Endothelial cell of umbilical vein (primary cell): ENCODE measurements at regions of chr3 and their contacts with region 1.

Region 1: DNA sequence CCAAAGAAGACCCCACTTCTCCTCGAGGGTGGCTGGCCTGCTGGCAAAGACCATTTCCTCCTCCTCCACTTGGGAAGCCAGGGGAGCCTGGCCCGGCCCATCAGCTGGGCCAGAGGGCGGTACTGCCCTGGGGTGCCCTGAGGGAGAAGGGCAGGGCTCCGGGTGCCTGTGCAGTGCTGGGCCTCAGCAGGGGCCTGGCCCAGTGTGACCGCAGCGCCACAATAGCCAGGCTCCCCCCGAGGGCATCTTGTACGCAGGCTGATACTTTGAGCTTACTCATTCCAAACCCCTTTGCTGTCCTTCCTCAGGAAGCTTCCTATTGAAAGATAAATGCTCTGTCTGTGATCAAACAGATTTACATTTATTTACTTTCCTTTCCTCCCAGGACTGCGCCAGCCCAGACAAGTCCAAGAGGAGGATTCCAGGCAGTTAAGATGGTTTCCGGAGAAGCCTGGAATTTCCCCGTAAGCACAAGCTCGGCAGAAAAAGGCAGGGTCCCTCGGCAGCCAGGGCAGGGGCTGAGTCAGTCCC is 240.1 kb downstream of the XXYLT1 start:
- DNase-seq: peak; percentile 95
- H3K4me3 ChIP-seq: no peak overlapping the region
- H3K27ac ChIP-seq: peak overlapping the region; percentile 99
- H3K4me1 ChIP-seq: peaks cover 53% of the 10 kb centered on the region
- H3K27me3 ChIP-seq: no peaks in the 10 kb centered on the region
- CTCF ChIP-seq: no peak
- POLR2A ChIP-seq: peak; percentile 65

Region 2: DNA sequence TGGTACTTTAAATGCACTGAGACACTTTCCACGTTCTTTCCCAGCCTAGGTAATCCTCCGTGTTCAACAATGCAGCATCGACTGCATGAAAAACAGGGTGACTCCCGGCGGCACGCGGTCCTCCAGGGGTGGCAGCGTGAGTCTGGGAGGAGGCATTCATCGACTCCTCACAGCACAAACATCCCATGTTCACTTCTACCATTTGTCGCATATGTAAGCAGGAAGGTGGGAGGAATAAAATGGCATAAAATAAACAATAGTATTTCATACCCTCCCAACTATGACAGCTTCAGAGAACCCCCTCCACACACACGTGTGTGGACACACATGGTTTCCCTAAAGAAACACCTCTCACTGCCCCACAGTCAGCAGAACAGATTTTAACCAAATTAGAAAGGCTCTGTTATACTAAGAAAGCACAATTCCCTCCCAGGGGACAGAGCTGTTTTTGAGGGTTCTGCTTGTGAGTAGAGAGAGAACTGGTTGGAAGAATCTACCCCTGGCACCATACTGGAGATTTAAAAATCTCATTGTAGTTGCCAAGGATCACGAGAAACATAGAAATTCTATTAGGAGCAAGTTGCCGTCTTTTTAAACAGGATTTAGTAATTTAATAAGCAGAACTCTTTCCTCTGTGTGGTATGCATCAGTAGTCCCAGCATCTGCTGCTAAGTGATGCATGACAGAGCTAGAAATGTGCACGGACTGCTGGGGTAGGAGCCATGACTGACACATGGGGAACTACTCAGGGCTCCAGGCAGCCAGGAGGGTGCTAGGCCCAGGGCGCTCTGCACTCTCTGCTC is 339.2 kb before region 1 on chr3:
- CTCF ChIA-PET with region 1: interaction called, 6 read pairs
- POLR2A ChIA-PET with region 1: interaction called, 11 read pairs
- dilution Hi-C with region 1: no loop called
- intact Hi-C with region 1: loop called (anchors 1 kb)
- DNase-seq: peak; percentile 68
- H3K4me3 ChIP-seq: no peak overlapping the region
- H3K27ac ChIP-seq: peak overlapping the region; percentile 39
- H3K4me1 ChIP-seq: peaks cover 19% of the 10 kb centered on the region
- H3K27me3 ChIP-seq: no peaks in the 10 kb centered on the region
- CTCF ChIP-seq: no peak
- POLR2A ChIP-seq: peak; percentile 76

Region 3: DNA sequence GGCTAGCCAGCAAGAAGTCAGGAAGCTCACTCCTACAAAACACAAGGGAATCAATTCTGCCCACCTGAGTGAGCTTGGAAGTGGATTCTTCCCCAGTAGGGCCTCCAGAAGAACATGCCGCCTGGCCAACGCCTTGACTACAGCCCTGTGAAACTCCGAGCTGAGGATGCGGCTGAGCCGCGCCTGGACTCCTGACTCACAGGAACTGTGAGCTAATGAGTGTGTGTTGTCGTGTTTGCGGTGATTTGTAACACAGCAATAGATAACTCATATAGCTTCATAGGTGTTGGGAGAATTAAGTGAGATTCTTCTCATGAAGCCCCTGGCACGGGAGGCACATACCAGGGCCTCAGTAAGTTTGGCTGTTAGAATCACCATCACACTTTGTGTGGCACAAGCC is 197.3 kb before region 1 on chr3:
- CTCF ChIA-PET with region 1: no interaction called
- POLR2A ChIA-PET with region 1: no interaction called
- dilution Hi-C with region 1: no loop called
- intact Hi-C with region 1: loop called (anchors 2 kb)
- DNase-seq: peak; percentile 66
- H3K4me3 ChIP-seq: no peak overlapping the region
- H3K27ac ChIP-seq: peak overlapping the region; percentile 62
- H3K4me1 ChIP-seq: peaks cover 22% of the 10 kb centered on the region
- H3K27me3 ChIP-seq: no peaks in the 10 kb centered on the region
- CTCF ChIP-seq: no peak
- POLR2A ChIP-seq: no peak

Region 4: GRCh38 chr3:194879991-194880939 is 150.6 kb before region 1 on chr3:
- CTCF ChIA-PET with region 1: no interaction called
- POLR2A ChIA-PET with region 1: no interaction called
- dilution Hi-C with region 1: no loop called
- intact Hi-C with region 1: loop called (anchors 1 kb)
- DNase-seq: peak; percentile 80
- H3K4me3 ChIP-seq: no peak overlapping the region
- H3K27ac ChIP-seq: peak overlapping the region; percentile 54
- H3K4me1 ChIP-seq: peaks cover 28% of the 10 kb centered on the region
- H3K27me3 ChIP-seq: no peaks in the 10 kb centered on the region
- CTCF ChIP-seq: no peak
- POLR2A ChIP-seq: no peak

Region 5: DNA sequence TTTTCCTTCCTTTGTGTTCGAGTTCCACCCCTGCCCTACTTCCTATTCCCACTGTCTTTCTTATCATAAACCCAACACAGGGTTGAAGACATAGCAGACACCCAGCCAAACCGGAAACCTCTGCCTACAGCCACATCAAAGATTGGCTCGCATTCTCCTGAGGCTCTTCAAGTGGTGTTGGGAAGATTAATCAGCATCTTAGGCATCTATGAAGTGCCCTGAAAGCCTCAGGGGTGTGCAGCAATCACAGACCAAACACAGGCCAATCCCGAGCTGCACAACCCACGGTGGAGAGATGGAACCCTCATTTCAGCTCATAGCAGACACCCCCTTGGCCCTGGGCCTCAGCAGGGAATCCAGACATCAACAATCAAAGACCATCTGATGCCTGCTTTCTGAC is 15.8 kb before region 1 on chr3:
- CTCF ChIA-PET with region 1: interaction called, 9 read pairs
- POLR2A ChIA-PET with region 1: interaction called, 3 read pairs
- dilution Hi-C with region 1: no loop called
- intact Hi-C with region 1: loop called (anchors 1 kb)
- DNase-seq: peak; percentile 57
- H3K4me3 ChIP-seq: no peak overlapping the region
- H3K27ac ChIP-seq: peak overlapping the region; percentile 29
- H3K4me1 ChIP-seq: peaks cover 22% of the 10 kb centered on the region
- H3K27me3 ChIP-seq: no peaks in the 10 kb centered on the region
- CTCF ChIP-seq: no peak
- POLR2A ChIP-seq: no peak

Region 6: DNA sequence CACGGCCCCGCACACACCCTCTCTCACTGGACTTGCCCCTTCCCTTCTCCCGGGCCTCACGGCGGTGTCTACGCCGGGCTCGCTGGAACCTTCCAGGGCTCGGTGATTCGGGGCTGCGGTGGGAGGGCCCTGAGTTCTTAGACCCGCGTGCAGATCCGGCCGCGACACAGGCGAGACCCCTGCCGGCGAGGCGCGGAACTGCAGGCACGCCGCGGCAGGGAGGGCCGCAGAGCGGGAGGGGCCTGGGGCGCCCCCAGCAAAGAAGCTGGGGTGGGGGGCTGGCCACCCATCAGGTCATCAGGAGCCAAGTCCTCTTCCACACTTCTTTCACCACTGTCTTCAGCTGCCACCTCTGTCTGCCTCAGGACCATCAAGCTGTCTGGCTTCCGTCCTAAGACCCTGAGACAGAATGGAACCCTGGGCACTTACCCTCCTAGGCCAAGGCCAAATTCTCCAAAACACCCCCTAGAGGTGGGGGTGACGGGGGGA is 75.6 kb after region 1 on chr3:
- CTCF ChIA-PET with region 1: interaction called, 9 read pairs
- POLR2A ChIA-PET with region 1: no interaction called
- dilution Hi-C with region 1: no loop called
- intact Hi-C with region 1: loop called (anchors 1 kb)
- DNase-seq: peak; percentile 76
- H3K4me3 ChIP-seq: no peak overlapping the region
- H3K27ac ChIP-seq: peak overlapping the region; percentile 96
- H3K4me1 ChIP-seq: peaks cover 44% of the 10 kb centered on the region
- H3K27me3 ChIP-seq: no peaks in the 10 kb centered on the region
- CTCF ChIP-seq: peak; percentile 97 to 98
- POLR2A ChIP-seq: no peak

Region 7: GRCh38 chr3:195162033-195162669 is 131.3 kb after region 1 on chr3:
- CTCF ChIA-PET with region 1: interaction called, 3 read pairs
- POLR2A ChIA-PET with region 1: interaction called, 4 read pairs
- dilution Hi-C with region 1: no loop called
- intact Hi-C with region 1: loop called (anchors 1 kb)
- DNase-seq: peak; percentile 99
- H3K4me3 ChIP-seq: no peak overlapping the region
- H3K27ac ChIP-seq: peak overlapping the region; percentile 95
- H3K4me1 ChIP-seq: peaks cover 85% of the 10 kb centered on the region
- H3K27me3 ChIP-seq: no peaks in the 10 kb centered on the region
- CTCF ChIP-seq: no peak
- POLR2A ChIP-seq: peak; percentile 89